Activated CD8-positive, alpha-beta T cell treated with anti-CD3 and anti-CD28 coated beads for 36 hours (primary cell): ENCODE measurements at regions of chr1 and their contacts with region 1.

Region 1: DNA sequence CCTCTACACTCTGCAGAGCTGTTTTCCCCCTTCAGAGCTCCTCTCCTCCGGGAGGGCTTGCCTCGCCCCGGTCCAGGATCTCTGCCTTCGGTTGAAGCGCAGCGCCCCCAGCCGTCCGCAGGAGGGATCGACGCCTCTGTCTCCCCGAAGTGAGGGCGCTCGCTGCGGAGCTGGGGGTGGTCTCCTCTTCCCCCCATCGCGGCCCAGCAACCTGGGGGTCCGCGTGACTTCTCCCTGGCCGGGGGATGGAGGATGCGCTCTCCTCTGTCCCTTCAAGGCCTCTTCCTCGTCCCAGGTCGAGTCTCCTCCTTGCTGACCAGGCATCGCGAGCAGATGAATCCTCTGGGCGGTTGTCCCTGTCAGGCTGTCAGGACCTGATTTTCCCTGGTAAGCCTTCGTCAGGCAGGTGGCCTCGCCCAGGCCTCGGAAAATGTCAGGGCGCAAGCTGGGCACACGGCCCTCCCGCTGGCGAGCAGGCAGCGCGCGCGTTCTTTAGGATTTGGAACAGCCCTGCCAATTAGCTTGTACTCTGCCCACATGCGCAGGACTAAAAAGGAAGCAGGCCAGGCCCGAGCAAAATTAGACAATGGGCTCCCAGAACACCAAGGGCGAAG is 90.5 kb downstream of the EDEM3 start:
- DNase-seq: peak; percentile 70
- ATAC-seq: peak; percentile 90
- H3K4me3 Mint-ChIP-seq: no peak overlapping the region
- H3K27ac Mint-ChIP-seq: no peak overlapping the region
- H3K4me1 Mint-ChIP-seq: peaks cover 2% of the 10 kb centered on the region
- H3K27me3 Mint-ChIP-seq: peaks cover 12% of the 10 kb centered on the region
- CTCF ChIP-seq: peak; percentile 94

Region 2: GRCh38 chr1:184075055-184076029 is 588.8 kb before region 1 on chr1:
- CTCF ChIA-PET with region 1: interaction called, 14 read pairs
- POLR2A ChIA-PET with region 1: no interaction called
- intact Hi-C with region 1: no loop called
- DNase-seq: peak; percentile 22
- ATAC-seq: no peak
- H3K4me3 Mint-ChIP-seq: no peak overlapping the region
- H3K27ac Mint-ChIP-seq: no peak overlapping the region
- H3K4me1 Mint-ChIP-seq: peaks cover 23% of the 10 kb centered on the region
- H3K27me3 Mint-ChIP-seq: no peaks in the 10 kb centered on the region
- CTCF ChIP-seq: peak; percentile 80

Region 3: DNA sequence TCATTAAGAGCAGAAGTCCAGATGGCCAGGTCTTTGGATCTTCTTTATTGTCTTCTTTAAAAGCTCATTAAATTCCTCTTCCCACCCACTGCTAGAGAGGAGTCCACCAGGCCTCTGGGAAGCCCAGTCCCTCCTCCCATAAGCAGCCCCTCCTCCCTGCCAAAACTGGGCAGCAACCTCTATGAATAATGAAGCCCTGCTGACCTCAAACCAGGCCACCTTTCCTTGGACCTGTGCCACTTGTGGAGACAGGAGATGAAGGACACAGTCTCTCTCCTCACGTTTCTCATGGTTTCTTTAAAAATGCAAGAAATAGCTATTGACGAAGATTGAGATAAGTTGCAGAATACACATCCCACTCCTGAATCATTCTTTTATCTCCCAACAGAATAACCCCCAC is 22.3 kb before region 1 on chr1:
- CTCF ChIA-PET with region 1: interaction called, 12 read pairs
- POLR2A ChIA-PET with region 1: no interaction called
- intact Hi-C with region 1: no loop called
- DNase-seq: no peak
- ATAC-seq: no peak
- H3K4me3 Mint-ChIP-seq: no peak overlapping the region
- H3K27ac Mint-ChIP-seq: no peak overlapping the region
- H3K4me1 Mint-ChIP-seq: no peaks in the 10 kb centered on the region
- H3K27me3 Mint-ChIP-seq: peaks cover 10% of the 10 kb centered on the region
- CTCF ChIP-seq: no peak

Region 4: DNA sequence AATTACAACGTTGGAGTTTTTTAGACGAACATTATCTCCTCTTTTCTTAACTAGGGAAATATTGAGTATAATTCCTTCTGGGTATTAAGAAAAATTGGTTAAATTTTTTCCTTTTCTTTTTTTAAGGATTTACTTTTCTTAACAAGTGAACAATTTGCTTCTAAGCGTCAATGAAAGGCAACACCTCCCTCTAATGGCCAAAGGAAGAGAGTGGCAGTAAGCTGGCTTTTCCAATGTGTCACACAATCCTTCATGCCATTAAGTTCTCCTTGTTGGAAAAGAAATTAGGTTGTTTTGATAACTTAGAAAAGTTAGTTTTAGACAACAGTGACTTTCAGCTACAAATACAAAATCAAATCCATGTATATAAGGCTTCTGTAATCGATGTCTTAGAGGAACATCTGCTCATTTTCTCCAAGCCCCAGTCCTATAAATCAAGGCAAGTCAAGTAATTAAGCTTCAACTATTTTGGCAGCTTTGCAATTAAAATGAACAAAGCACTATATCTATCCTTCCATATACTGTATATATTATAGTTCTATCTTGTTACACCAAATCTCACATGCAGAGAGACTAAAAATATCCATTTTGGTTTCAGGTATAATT is 27.7 kb after region 1 on chr1:
- CTCF ChIA-PET with region 1: interaction called, 10 read pairs
- POLR2A ChIA-PET with region 1: no interaction called
- intact Hi-C with region 1: no loop called
- DNase-seq: no peak
- ATAC-seq: no peak
- H3K4me3 Mint-ChIP-seq: no peak overlapping the region
- H3K27ac Mint-ChIP-seq: no peak overlapping the region
- H3K4me1 Mint-ChIP-seq: peaks cover 5% of the 10 kb centered on the region
- H3K27me3 Mint-ChIP-seq: no peaks in the 10 kb centered on the region
- CTCF ChIP-seq: peak; percentile 47

Region 5: DNA sequence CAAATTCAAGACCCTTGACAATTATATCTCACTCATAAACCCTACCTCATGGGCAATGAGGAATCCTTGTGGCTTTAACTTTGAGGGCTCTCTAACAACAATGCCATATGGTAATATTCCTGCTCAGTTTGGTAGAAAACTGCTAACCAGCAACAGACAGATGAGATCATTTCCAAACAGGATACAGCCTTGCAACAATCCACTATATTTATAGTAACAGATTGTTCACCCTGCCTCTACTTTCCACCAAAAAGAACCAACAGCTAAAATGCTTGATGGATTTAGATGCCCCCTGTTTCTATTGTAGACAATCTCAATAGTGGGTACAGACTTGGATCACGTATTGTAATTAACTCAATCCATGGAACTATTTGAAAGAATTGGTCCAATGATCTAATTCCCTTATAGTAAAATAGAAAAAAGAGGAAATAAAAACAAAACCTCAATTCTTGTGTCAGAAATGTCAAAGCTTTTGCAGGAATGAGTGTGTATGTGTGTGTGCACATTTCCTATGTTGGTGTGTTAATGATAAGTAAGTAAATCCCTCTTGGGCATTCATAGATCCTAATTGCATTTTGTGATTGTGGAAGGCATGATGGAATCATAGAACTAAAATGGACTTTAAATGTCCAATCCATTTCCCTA is 190.5 kb after region 1 on chr1:
- CTCF ChIA-PET with region 1: no interaction called
- POLR2A ChIA-PET with region 1: no interaction called
- intact Hi-C with region 1: no loop called
- DNase-seq: no peak
- ATAC-seq: no peak
- H3K4me3 Mint-ChIP-seq: no peak overlapping the region
- H3K27ac Mint-ChIP-seq: no peak overlapping the region
- H3K4me1 Mint-ChIP-seq: peaks cover 2% of the 10 kb centered on the region
- H3K27me3 Mint-ChIP-seq: peaks cover 2% of the 10 kb centered on the region
- CTCF ChIP-seq: no peak